OCI-LY7 (cell line): ENCODE measurements at regions of chr2 and their contacts with region 1.

Region 1: GRCh38 chr2:240586198-240586918 is at the start of gene CAPN10:
- DNase-seq: peak; percentile 97
- H3K4me3 ChIP-seq: peak within 1 kb of the TSS; percentile 96
- H3K27ac ChIP-seq: peak within 1 kb of the TSS; percentile 98
- H3K4me1 ChIP-seq: peaks cover 51% of the 10 kb centered on the region
- CTCF ChIP-seq: no peak
- total RNA-seq, gene CAPN10: 54.1 and 78.1 TPM in 2 replicates

Region 2: DNA sequence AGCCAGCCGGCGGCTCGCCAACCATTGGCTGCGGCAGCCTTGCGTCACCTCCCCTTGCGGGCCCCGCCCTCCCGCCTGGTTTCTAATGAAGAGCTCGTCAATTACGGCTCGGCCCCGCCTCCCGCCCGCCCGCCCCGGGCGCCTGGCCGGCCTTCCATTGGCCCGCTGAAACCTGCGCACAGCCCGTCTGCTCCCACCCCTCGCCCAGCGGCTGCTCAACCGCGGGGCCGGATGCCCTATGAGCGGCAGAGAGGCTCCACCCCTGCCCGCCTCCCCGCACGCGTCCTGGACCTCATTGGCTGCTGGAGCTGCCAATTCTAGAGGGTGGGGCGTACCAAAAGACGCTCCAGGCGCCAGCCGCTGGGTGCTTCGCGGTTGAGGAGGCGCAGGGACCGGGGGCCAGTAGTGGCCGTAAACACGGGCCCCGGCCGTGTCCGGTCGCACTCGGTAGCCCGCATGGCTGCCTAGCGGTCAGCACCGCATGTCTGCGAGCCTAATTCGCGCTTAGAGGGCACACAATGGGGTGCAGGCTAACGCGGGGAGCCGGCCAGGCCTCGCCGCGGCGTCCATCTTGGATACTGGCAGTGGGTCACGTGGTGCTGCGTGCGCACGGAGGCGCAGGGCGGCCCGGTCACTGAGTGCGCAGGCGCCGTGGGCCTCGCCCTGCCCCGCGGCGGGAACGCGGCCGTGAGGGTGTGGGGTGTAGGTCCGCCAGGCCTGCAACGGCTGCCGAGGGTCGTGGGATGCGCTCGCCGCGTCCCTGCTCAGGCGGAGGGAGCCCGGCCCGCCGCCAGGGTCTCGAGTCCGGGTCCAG is 1185.1 kb before region 1 on chr2:
- CTCF ChIA-PET with region 1: no interaction called
- POLR2A ChIA-PET with region 1: no interaction called
- intact Hi-C with region 1: loop called (anchors 5 kb)
- DNase-seq: peak; percentile 97
- H3K4me3 ChIP-seq: peak overlapping the region; percentile 68
- H3K27ac ChIP-seq: peak overlapping the region; percentile 54
- H3K4me1 ChIP-seq: peaks cover 19% of the 10 kb centered on the region
- CTCF ChIP-seq: no peak

Region 3: GRCh38 chr2:239561446-239562001 is 1024.8 kb before region 1 on chr2:
- CTCF ChIA-PET with region 1: no interaction called
- POLR2A ChIA-PET with region 1: no interaction called
- intact Hi-C with region 1: no loop called
- DNase-seq: no peak
- H3K4me3 ChIP-seq: no peak overlapping the region
- H3K27ac ChIP-seq: no peak overlapping the region
- H3K4me1 ChIP-seq: no peaks in the 10 kb centered on the region
- CTCF ChIP-seq: no peak

Region 4: GRCh38 chr2:240513549-240514287 is 72.6 kb before region 1 on chr2:
- CTCF ChIA-PET with region 1: no interaction called
- POLR2A ChIA-PET with region 1: no interaction called
- intact Hi-C with region 1: loop called (anchors 1 kb)
- DNase-seq: peak; percentile 79
- H3K4me3 ChIP-seq: no peak overlapping the region
- H3K27ac ChIP-seq: no peak overlapping the region
- H3K4me1 ChIP-seq: peaks cover 4% of the 10 kb centered on the region
- CTCF ChIP-seq: peak; percentile 93

Region 5: DNA sequence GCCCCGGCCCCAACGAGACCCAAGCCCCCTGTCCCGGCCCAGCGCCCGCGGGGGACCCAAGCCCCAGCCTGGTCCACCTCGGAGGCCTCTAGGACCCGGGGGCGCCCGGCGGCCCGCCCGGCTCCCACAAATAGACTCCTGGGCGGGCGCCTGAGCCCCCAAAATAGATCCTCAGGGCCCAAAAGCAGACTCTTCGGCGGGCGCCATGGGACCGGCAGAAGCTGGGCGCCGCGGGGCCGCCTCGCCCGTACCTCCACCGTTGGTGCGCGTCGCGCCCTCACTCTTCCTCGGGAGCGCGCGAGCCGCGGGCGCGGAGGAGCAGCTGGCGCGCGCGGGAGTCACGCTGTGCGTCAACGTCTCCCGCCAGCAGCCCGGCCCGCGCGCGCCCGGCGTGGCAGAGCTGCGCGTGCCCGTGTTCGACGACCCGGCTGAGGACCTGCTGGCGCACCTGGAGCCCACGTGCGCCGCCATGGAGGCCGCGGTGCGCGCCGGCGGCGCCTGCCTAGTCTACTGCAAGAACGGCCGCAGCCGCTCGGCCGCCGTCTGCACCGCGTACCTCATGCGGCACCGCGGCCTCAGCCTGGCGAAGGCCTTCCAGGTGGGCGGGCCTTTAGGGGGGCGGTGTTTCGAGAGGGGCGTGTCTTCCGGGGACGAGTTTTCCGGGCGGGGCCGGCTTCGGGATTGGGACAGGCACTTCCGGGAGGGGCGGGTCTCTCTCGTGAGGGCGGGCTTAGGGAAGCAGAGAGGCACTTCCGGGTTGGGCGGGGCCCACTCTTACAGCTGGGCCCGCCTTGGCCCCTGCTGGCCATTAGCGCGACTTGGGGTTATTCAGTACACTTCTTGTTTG is 25.7 kb before region 1 on chr2:
- CTCF ChIA-PET with region 1: interaction called, 13 read pairs
- POLR2A ChIA-PET with region 1: interaction called, 59 read pairs
- intact Hi-C with region 1: loop called (anchors 1 kb)
- DNase-seq: peak; percentile 98
- H3K4me3 ChIP-seq: peak overlapping the region; percentile 91
- H3K27ac ChIP-seq: peak overlapping the region; percentile 86
- H3K4me1 ChIP-seq: peaks cover 60% of the 10 kb centered on the region
- CTCF ChIP-seq: no peak

Region 6: DNA sequence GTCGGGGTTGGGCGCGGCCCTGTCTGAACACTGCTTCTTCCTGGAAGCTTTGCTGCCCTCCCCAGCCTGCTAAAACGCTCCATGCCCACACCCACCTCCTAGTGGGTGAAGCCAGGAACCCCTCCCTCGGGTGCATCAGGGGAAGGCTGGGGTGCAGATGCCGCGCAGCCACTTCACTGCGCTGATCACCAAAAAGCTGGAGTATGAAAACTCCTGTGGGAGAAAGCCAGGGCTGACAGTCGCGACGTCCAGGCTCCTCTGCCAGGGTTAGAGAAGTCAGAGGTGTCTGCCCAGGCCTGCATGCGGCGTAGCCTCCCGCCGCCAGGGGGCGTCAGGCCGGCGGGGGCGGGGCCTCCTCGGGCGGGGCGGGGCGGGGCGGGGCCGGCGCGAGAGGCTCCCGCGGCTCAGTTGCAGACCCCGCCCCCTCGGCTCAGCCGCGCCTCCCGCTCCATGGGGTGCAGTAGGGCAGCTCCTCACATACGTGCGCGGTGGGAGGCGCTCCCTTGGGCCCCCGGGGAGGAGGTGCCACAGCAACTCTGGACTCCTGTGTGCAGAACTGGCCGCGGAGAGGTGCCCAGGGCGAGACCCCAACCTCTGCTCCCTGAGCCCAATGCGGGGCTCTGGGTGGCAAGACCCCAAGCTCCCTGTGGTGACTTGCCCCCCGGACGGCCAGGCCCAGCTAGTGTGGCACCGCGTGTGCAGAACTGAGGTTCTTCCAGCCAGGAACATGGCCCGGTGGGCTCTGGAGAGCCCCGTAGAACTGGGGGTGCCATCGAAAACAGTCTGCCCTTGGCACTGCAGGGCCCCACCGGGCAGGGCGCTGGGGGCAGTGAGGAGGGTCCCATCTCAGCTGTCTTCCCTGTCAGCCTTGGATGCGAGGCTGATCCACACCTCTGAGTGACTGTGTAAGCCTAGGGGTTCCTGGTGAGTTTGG is 19.9 kb before region 1 on chr2:
- CTCF ChIA-PET with region 1: interaction called, 13 read pairs
- POLR2A ChIA-PET with region 1: interaction called, 59 read pairs
- intact Hi-C with region 1: loop called (anchors 1 kb)
- DNase-seq: peak; percentile 90
- H3K4me3 ChIP-seq: peak overlapping the region; percentile 72
- H3K27ac ChIP-seq: peak overlapping the region; percentile 84
- H3K4me1 ChIP-seq: peaks cover 63% of the 10 kb centered on the region
- CTCF ChIP-seq: peak; percentile 80

Region 7: DNA sequence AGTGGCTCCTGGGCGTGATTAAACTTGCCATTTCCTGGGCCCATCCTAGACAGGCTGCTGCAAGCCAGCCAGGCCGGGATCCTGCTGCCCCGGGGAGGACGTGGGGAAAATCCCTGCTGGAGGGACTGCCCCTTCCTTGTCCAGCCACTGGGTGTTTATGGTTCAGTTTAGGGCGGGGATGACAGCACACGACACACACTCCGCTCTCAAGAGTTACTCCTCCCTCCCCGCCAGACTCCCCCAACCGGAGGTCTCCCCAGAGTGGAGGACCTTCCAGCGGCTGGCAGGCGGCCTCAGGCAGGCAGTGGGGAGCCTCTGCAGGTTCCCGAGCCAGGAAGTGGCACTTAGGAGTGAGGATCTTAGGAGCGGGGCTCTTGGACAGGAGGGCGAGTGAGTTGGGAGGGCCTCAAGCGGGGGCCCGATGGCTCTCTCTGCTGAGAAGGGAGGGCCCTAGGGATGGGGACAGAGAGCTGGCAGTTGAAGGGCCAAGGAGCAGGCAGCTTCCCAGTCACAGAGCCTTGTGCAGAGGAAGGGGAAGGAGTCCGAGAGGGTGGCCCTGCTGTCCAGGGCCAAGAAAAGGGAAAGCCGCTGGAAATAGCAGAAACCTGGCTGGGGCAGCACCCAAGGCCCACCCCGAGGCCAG is 33.3 kb after region 1 on chr2:
- CTCF ChIA-PET with region 1: no interaction called
- POLR2A ChIA-PET with region 1: interaction called, 3 read pairs
- intact Hi-C with region 1: loop called (anchors 2 kb)
- DNase-seq: no peak
- H3K4me3 ChIP-seq: no peak overlapping the region
- H3K27ac ChIP-seq: no peak overlapping the region
- H3K4me1 ChIP-seq: peaks cover 6% of the 10 kb centered on the region
- CTCF ChIP-seq: no peak

Region 8: DNA sequence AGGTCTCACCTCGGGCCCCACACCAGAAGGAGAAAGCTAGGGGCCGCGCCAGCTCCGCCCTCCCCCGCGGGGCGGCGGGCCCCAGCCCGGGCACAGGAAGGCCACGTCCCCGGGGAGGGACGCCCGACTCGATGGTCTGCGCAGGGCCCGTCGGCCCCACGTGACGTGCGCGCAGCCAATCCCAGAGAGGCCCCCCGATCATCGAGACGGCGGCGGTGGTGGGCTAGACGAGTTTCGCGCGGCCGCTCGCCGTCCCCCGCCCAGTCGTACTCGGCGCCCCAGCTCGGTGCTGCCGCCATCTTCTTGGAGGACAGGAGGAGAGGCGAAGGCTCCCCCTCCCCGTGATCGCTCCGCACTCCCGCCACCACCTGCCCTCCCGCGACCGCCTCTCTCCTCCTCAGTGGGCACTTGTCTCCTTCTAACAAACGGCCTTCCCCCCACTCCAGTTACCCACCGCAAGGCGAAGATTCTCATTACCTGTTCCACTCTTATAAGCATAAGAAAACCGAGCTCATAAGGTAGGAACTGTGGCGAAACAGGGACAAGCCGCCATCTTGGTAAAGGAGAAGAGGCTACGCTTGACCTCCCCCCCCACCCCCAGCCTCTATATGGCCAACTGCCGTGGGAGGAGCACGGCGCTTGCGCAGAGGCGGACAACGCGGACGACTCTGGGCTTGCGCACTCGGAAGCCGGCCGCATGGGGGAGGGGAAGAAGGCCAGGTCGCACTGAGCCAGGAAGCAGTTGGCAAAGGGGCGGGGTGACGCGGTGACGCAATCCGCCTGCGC is 728.9 kb after region 1 on chr2 and contains the start of gene HDLBP:
- CTCF ChIA-PET with region 1: no interaction called
- POLR2A ChIA-PET with region 1: no interaction called
- intact Hi-C with region 1: loop called (anchors 10 kb)
- DNase-seq: peak; percentile 99
- H3K4me3 ChIP-seq: peak within 1 kb of the TSS; percentile 96
- H3K27ac ChIP-seq: peak within 1 kb of the TSS; percentile 87
- H3K4me1 ChIP-seq: peaks cover 68% of the 10 kb centered on the region
- CTCF ChIP-seq: peak; percentile 79
- total RNA-seq, gene HDLBP: 155 and 176 TPM in 2 replicates